HepG2 (cell line): ENCODE measurements at regions of chr4 and their contacts with region 1.

Region 1: GRCh38 chr4:52983563-52984303 is 121.6 kb downstream of the RASL11B start:
- DNase-seq: peak; percentile 67
- ATAC-seq: peak; percentile 82
- H3K4me3 ChIP-seq: no peak overlapping the region
- H3K27ac ChIP-seq: no peak overlapping the region
- H3K4me1 ChIP-seq: peaks cover 13% of the 10 kb centered on the region
- H3K27me3 ChIP-seq: no peaks in the 10 kb centered on the region
- CTCF ChIP-seq: peak; percentile 64
- EP300 ChIP-seq: no peak
- POLR2A ChIP-seq: no peak
- RAD21 ChIP-seq: no peak

Region 2: DNA sequence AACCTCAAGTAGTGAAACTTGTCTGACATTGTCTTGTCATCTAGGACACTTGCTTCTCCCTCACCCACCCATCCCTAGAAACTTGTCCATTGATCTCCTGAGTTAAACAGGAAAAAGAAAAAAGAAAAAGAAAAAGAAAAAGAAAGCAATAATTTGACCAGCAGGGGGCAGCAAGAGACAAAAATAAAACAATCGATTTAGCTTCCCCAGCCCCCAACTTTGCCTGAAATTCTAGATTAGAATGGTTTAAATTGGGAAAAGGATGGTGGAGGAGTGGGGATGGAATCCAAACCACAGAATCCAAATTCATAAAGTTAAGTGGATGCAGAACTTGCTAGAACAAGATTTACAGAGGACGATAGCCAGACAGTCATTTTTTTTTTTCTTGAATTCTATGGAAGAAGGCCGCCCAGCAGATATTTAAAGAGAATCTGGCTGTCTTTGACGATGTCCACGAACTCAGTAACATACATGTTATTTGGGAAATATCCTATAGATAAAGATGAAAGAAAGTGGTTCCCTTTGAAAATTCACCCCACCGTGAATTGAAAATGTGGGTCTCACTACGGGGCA is 607.5 kb before region 1 on chr4:
- CTCF ChIA-PET with region 1: interaction called, 15 read pairs
- POLR2A ChIA-PET with region 1: no interaction called
- in situ Hi-C with region 1: loop called (anchors 5 kb)
- intact Hi-C with region 1: loop called (anchors 1 kb)
- DNase-seq: peak; percentile 45
- ATAC-seq: no peak; the same call in 2 of the 3 replicates
- H3K4me3 ChIP-seq: no peak overlapping the region
- H3K27ac ChIP-seq: no peak overlapping the region
- H3K4me1 ChIP-seq: peaks cover 16% of the 10 kb centered on the region
- H3K27me3 ChIP-seq: 0 out of 5 replicates have a peak, but pooled peaks cover 0 to 3% of the 10 kb centered on the region in 2 experiments
- CTCF ChIP-seq: peak; percentile 61
- EP300 ChIP-seq: no peak
- POLR2A ChIP-seq: no peak
- RAD21 ChIP-seq: peak; percentile 16; the same call in 1 of the 2 replicates

Region 3: GRCh38 chr4:52588097-52588782 is 395.5 kb before region 1 on chr4:
- CTCF ChIA-PET with region 1: interaction called, 6 read pairs
- POLR2A ChIA-PET with region 1: no interaction called
- in situ Hi-C with region 1: no loop called
- intact Hi-C with region 1: loop called (anchors 1 kb)
- DNase-seq: peak; percentile 33
- ATAC-seq: peak; percentile 96
- H3K4me3 ChIP-seq: no peak overlapping the region
- H3K27ac ChIP-seq: no peak overlapping the region
- H3K4me1 ChIP-seq: peaks cover 10% of the 10 kb centered on the region
- H3K27me3 ChIP-seq: no peaks in the 10 kb centered on the region
- CTCF ChIP-seq: peak; percentile 78
- EP300 ChIP-seq: no peak
- POLR2A ChIP-seq: no peak
- RAD21 ChIP-seq: no peak

Region 4: DNA sequence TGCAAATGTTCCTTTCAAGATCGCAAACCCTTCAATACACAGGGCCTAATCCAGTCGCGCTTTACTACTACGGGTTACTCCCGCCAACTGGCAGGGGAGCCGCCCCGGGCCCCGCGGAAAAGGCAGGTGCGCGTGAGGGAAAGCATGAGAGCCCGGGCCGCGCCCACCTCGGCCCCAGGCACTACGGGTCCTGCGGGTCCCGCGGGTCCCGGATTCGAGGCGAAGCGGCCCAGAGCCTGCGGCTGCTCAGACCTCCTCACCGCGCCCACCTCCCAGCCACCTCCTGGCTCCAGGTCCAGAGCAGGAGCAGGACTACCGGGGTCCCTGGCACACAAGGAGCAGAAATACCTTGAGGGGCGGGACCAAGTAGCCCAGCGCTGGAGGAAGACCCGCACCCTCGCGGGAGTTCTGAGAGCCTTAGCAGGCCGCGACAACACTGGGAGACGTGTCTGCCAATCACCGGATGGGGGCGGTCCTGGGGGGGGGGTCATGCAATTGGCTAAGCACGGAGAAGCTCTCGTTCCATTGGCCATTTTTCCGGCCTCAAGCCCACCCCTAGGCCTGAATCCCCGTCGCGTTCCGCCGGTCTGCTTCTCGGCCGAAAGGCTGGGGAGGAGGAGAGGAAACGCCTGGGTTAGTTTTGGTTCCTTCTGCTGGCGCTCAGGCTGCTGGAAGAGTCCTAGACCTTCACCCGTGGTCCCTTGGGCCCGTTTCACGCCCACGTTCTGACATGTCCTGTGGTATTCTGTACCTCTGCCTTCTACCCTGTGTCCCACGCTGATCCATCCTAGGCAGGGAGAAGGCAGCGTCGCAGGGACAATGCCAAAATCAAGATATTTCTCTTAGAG is 261.5 kb before region 1 on chr4:
- CTCF ChIA-PET with region 1: no interaction called
- POLR2A ChIA-PET with region 1: no interaction called
- in situ Hi-C with region 1: loop called (anchors 25 kb)
- intact Hi-C with region 1: loop called (anchors 5 kb)
- DNase-seq: peak; percentile 81
- ATAC-seq: peak; percentile 94
- H3K4me3 ChIP-seq: peak overlapping the region; percentile 45 to 74 (median 67)
- H3K27ac ChIP-seq: peak overlapping the region; percentile 63
- H3K4me1 ChIP-seq: no peaks in the 10 kb centered on the region
- H3K27me3 ChIP-seq: no peaks in the 10 kb centered on the region
- CTCF ChIP-seq: no peak
- EP300 ChIP-seq: no peak
- POLR2A ChIP-seq: peak; percentile 77 to 78
- RAD21 ChIP-seq: peak; percentile 9; the same call in 1 of the 2 replicates

Region 5: GRCh38 chr4:53043055-53043454 is 59.3 kb after region 1 on chr4:
- CTCF ChIA-PET with region 1: no interaction called
- POLR2A ChIA-PET with region 1: no interaction called
- in situ Hi-C with region 1: no loop called
- intact Hi-C with region 1: no loop called
- DNase-seq: no peak
- ATAC-seq: no peak
- H3K4me3 ChIP-seq: no peak overlapping the region
- H3K27ac ChIP-seq: no peak overlapping the region
- H3K4me1 ChIP-seq: peaks cover 9% of the 10 kb centered on the region
- H3K27me3 ChIP-seq: no peaks in the 10 kb centered on the region
- CTCF ChIP-seq: no peak
- EP300 ChIP-seq: no peak
- POLR2A ChIP-seq: no peak
- RAD21 ChIP-seq: no peak